ENCODE measurements at regions of chr11 and their contacts with region 1.

Region 1: DNA sequence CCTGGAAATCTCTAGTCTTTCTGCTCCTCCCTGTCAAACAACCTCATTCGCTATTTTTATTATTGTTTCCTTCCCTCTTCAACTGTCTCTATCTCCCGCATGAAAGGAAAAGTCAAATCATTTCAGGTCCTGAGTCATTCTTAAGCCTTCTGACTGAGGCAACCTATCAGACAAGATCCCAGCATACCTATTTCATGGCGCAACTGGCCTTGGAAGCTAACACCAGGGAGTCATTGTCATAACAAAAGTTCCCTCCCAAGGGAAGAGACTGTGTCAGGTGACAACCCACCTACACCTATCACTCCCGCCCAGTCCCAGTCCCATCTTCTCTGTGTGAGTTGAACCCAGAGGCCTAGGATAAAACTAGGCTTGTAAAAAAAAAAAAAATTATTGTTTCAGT is 10.2 kb upstream of the ARHGAP42 start:
- DNase-seq: no peak
- H3K4me3 ChIP-seq: no peak overlapping the region
- H3K27ac ChIP-seq: no peak overlapping the region
- H3K4me1 ChIP-seq: no peaks in the 10 kb centered on the region
- H3K27me3 ChIP-seq: no peaks in the 10 kb centered on the region
- CTCF ChIP-seq: no peak

Region 2: DNA sequence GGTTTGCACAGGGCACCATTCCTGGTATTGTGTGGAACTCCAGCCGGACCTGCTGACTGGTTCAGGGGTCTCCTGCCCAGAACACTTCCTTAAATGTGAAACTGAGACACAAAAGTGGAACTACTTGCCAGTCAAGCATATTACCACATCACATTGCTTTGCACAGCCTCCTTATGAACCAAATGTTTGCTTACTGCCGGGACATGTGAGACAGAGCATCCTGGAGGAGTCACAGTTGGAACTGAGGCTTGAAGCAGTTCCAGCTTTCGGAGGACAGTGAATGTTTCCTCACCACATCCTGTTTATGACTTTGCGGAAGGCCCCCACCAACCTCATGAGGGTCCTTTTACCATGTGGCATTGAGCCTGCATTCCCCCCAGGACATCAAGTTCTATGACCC is 95.6 kb before region 1 on chr11:
- intact Hi-C with region 1: loop called (anchors 10 kb)
- DNase-seq: no peak
- H3K4me3 ChIP-seq: no peak overlapping the region
- H3K27ac ChIP-seq: no peak overlapping the region
- H3K4me1 ChIP-seq: no peaks in the 10 kb centered on the region
- H3K27me3 ChIP-seq: no peaks in the 10 kb centered on the region
- CTCF ChIP-seq: no peak

Measured in colonic mucosa (tissue), 4 donors.